Spleen (tissue), 13 donors: ENCODE measurements at regions of chr13 and their contacts with region 1.

Region 1: DNA sequence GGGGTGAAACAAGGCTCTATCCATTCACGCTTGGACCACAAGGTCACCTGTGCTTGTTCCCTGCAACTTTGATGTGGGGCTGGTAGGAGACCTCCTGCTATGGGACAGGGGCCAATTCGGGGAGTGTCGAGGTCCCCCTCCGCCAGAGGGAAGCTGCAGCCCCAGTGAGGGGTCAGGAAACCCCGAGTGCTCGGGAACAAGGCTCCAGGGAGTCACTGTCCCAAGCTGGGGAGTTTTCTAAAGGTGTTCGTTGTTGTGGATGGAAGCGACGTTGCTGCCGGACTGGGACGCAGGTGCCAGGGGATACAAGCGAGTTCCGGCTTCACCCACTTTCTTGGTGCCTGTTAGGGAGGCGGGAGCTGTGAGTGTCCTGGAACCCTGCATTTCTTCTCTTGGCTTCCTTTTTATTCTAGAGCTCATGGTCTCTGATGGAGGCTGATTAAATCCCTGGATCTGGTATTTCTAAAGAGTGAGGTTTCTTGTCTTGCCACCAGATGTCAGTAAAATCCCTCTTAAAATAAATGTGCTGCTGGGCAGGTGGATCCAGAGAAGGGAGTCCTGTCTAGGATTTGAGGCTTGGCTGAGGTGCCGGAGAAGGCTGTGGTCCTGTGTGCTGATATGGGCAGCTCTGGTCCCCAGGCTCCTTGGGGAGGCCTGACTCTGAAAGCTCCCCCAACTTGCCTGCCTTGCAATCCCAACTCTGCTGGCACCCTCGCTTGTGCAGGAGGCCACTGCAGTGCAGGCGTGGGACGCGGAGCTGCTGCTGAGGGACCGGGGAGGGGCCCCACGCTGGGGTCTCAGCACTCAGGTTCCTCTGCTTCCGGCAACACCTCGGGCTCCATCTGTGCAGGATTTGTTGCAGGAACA is 153.9 kb downstream of the TEX29 start:
- DNase-seq: no peak
- H3K4me3 ChIP-seq: no peak overlapping the region
- H3K27ac ChIP-seq: no peak overlapping the region
- H3K4me1 ChIP-seq: peaks cover 0 to 5% (median 0%) of the 10 kb centered on the region in 6 donors
- H3K27me3 ChIP-seq: peaks cover 0 to 20% (median 0%) of the 10 kb centered on the region in 7 donors
- CTCF ChIP-seq: peak in 10 of 11 experiments; percentile 12 to 59 (median 46)
- POLR2A ChIP-seq: no peak

Region 2: DNA sequence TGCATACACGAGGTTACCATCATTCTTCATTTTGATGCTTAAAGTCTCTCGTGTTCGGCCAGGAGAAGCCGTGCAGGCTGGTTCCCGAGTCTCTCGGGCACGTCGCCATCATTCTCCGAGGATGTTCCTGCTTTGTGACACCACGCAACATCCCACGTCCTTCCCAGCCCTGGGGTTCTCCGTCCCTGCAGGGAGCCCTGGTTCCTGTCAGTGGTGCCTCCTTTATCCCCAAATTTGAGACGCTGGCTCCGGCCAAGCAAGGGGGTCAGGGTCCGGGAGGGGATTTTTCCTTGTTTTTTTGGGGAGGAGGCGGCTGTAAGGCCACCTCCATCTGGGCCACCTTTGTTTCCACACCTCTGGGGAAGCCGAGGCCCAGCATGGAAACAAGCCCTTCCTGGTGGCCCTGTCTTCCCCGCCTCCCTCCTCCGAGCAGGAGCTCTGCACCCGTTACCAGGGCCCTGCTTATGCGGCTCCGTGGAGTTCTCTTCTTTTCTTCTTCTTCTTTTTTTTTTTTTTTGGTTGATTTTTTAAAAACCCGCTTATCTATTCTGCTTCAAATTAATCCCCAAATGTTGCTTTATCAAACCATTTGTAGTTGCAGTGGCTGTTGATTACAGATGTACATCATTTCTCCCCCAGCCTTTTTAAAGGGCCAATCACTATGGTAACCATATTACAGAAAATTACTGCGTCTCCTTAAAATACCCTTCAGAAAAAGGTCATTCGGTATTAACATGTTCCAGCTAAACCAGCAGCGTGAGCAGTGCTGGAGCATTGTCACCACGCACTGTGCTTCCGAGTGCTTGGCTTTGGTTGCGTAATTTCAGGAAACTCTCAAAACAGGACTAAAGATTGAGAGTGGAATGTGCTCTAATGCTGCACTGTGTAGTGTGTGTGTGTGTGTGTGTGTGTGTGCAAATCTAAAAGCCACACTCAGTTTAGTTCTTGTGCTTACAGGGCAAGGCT is 103.5 kb before region 1 on chr13:
- intact Hi-C with region 1: no loop called
- DNase-seq: peak; percentile 56
- H3K4me3 ChIP-seq: no peak overlapping the region
- H3K27ac ChIP-seq: no peak overlapping the region
- H3K4me1 ChIP-seq: no peaks in the 10 kb centered on the region
- H3K27me3 ChIP-seq: no peaks in the 10 kb centered on the region
- CTCF ChIP-seq: no peak
- POLR2A ChIP-seq: no peak

Region 3: DNA sequence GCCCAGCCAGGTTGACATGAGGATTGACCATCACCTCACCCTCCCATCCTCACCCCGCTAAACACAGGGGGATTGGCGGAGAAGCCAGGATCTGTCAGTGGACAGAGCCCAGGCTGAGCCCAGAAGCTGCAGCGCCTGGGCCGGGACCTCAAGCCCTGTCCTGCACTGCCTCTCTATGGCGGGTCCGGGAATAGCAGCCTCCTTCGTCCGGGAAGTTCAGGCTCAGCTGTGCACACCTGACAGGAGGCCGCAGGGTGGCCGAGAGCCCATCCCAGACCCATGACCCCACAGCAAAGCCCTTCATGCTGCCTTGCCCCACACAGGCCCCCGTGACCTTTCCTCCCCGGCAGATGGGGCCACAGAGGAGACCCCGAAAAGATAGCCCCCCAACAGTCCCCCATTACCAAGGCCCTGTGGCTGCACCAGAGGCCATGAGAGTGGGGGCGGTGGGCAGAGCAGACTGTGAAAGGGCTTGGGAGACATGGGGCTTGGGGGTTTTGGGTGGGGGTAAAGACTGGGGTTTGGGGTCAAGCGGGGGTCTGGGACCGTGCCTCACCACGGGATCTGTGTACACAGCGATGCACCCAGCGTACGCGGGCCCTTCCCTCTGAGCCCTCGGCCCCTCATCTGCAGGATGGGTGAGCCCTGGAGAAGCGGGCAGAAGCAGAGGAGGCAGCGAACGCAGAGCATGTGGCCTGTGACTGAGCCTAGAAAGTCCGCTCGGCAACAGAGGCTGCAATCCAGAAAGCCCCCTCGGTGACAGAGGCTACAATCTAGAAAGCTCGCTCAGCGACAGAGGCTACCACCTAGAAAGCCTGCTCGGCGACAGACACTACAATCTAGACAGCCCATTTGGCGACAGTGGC is 969.9 kb after region 1 on chr13:
- intact Hi-C with region 1: loop called (anchors 5 kb)
- DNase-seq: peak; percentile 78
- H3K4me3 ChIP-seq: no peak overlapping the region
- H3K27ac ChIP-seq: no peak overlapping the region
- H3K4me1 ChIP-seq: peaks cover 0 to 8% (median 2%) of the 10 kb centered on the region in 6 donors
- H3K27me3 ChIP-seq: peaks cover 0 to 82% (median 18%) of the 10 kb centered on the region in 7 donors
- CTCF ChIP-seq: peak; percentile 20 to 73 (median 67)
- POLR2A ChIP-seq: no peak

Region 4: DNA sequence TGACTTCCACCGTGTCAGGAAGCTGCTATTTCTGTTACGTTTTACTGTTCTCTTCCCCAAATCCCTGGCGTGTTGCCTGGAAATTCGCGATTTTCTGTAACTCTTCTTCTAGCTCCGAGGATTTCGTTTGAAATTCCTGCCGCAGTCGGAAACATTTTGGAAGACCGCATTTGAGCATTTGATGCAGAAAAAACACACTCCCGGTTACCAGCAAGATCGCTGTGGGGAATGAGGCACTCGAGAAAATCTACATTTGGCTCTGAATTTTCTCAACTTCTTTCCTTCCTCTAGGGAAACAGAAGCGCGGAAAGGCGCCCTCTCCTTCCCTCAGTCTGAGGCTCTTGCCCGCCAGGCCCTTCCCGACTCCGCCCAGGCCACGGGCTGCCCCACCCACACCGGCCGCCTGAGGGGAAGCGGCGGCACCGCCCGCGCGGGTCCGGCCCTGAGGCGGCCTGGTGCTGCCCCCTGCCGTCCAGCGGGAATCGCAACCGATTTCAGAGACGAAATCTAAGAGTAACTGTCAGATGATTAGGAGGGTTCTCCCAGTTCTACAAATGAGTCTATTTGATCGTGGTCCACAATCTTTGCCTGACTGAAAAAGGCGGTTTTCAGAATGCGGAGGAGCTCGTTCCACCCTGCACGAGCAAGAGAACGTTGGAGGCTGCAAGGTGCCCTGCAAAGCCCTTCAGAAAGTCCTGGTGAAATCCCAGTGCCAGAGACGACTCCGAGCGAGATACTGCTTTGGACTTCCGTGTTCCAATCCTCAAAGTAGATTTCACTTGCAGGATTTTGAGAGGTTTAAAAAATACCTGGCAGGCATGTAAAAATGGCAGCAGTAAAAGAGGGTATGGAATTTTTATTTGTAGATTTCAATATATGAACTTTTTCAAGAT is 1132.0 kb after region 1 on chr13:
- intact Hi-C with region 1: loop called (anchors 10 kb)
- DNase-seq: peak; percentile 98
- H3K4me3 ChIP-seq: peak overlapping the region; percentile 22 to 68 (median 40)
- H3K27ac ChIP-seq: peak overlapping the region in 6 of 8 donors; percentile 51 to 70 (median 52)
- H3K4me1 ChIP-seq: peaks cover 0 to 16% (median 12%) of the 10 kb centered on the region in 6 donors
- H3K27me3 ChIP-seq: peaks cover 0 to 20% (median 0%) of the 10 kb centered on the region in 7 donors
- CTCF ChIP-seq: peak; percentile 79 to 96 (median 94)
- POLR2A ChIP-seq: no peak